H1 (cell line): ENCODE measurements at regions of chr19 and their contacts with region 1.

Region 1: GRCh38 chr19:13537454-13537853 is 31.2 kb upstream of the CACNA1A start:
- DNase-seq: no peak
- H3K4me3 ChIP-seq: no peak overlapping the region
- H3K27ac ChIP-seq: no peak overlapping the region
- H3K4me1 ChIP-seq: no peaks in the 10 kb centered on the region; a peak in 1 of 7 replicates
- H3K27me3 ChIP-seq: no peaks in the 10 kb centered on the region
- CTCF ChIP-seq: no peak
- EP300 ChIP-seq: no peak
- POLR2A ChIP-seq: no peak
- RAD21 ChIP-seq: no peak

Region 2: DNA sequence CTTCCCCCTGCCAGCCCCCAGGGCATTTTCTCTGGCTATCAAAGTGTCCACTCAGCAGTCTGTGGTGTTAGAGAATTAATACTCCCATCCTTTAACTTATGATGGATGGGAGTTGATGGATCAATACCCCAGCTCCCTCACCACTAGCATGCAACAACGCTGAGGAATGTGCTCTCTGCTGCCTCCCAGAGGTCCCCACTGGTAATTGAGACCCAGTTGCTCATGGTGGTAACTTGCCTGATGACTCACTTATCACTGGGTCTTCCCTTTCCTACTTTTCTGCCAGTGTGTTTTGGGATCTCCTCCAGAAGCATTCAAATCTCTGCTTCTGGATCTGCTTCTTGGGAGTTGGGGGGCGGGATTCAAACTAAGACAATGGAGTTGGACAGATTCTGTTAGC is 10.9 kb before region 1 on chr19:
- CTCF ChIA-PET with region 1: interaction called, 38 read pairs
- POLR2A ChIA-PET with region 1: no interaction called
- DNase-seq: peak; percentile 56 to 83
- H3K4me3 ChIP-seq: no peak overlapping the region
- H3K27ac ChIP-seq: no peak overlapping the region
- H3K4me1 ChIP-seq: no peaks in the 10 kb centered on the region
- H3K27me3 ChIP-seq: no peaks in the 10 kb centered on the region; a peak in 1 of 7 replicates
- CTCF ChIP-seq: peak; percentile 74 to 92 (median 83)
- EP300 ChIP-seq: no peak
- POLR2A ChIP-seq: no peak
- RAD21 ChIP-seq: peak; percentile 59 to 67

Region 3: DNA sequence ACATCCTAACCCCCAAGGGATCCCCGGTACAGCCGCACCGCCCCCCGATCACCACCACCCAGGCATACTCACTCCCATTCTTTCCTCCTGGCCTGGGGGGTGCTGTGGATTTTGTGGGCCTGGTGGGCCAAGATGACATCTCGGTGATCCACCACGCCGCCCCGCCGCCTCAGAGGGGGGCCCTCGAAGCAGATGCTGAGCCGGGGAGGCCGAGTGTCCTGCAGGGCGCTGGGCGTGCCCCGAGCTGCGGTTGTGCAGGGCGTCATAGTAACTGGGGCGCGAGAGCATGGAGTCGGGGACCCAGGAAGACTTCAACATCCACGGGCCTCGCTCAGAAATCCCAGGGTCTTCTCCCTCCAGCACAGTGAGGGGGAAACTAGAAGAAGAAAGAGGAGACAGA is 62.2 kb after region 1 on chr19:
- CTCF ChIA-PET with region 1: no interaction called
- POLR2A ChIA-PET with region 1: no interaction called
- DNase-seq: no peak
- H3K4me3 ChIP-seq: no peak overlapping the region
- H3K27ac ChIP-seq: no peak overlapping the region
- H3K4me1 ChIP-seq: no peaks in the 10 kb centered on the region; a peak in 1 of 7 replicates
- H3K27me3 ChIP-seq: no peaks in the 10 kb centered on the region
- CTCF ChIP-seq: no peak
- EP300 ChIP-seq: no peak
- POLR2A ChIP-seq: no peak
- RAD21 ChIP-seq: no peak

Region 4: GRCh38 chr19:13610039-13610691 is 72.7 kb after region 1 on chr19:
- CTCF ChIA-PET with region 1: no interaction called
- POLR2A ChIA-PET with region 1: no interaction called
- DNase-seq: no peak
- H3K4me3 ChIP-seq: no peak overlapping the region
- H3K27ac ChIP-seq: no peak overlapping the region
- H3K4me1 ChIP-seq: peaks cover 0 to 7% (median 5%) of the 10 kb centered on the region in 4 experiments; a peak in 5 of 7 replicates
- H3K27me3 ChIP-seq: no peaks in the 10 kb centered on the region
- CTCF ChIP-seq: peak in 2 of 3 experiments; percentile 18 to 35; a peak in 3 of 4 replicates
- EP300 ChIP-seq: no peak
- POLR2A ChIP-seq: no peak
- RAD21 ChIP-seq: peak; percentile 53 to 63